ENCODE measurements at regions of chr17 and their contacts with region 1.

Region 1: DNA sequence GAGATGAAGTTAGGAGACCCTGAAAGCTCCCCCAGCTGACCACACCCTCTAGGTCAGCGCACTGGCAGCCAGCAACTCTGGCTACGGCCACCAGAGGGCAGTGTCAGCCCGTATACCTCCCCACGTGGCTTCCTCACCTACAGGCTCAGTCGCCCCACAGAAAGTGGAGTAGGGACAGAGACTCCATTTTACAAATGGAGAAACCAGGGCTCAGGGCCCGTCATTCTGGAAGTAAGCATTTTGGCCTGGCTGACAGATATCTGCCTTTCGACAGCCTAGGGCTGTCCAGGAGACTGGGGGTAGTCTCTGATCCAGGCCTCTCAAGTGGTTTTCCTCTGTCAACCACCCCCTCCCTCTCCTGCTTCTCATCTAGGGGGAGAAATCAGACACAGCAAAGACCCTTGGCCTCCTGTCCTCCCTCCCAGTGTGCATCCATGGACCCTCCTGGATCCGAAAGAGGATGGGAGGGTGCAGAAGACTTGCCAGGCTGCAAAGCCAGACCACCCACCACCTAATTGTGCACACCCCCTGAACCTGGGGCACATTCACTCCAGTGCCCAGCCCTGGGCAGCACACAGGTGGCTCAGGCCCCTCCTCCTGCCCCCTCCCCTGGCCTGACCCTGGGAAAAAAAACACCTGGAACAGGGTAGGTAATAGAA is 3.8 kb upstream of the HAP1 start:
- DNase-seq: peak; percentile 88
- ATAC-seq: peak; percentile 87

Region 2: GRCh38 chr17:41801374-41802271 is 63.4 kb after region 1 on chr17:
- intact Hi-C with region 1: loop called (anchors 2 kb)
- DNase-seq: peak; percentile 90
- ATAC-seq: peak; percentile 88

Region 3: DNA sequence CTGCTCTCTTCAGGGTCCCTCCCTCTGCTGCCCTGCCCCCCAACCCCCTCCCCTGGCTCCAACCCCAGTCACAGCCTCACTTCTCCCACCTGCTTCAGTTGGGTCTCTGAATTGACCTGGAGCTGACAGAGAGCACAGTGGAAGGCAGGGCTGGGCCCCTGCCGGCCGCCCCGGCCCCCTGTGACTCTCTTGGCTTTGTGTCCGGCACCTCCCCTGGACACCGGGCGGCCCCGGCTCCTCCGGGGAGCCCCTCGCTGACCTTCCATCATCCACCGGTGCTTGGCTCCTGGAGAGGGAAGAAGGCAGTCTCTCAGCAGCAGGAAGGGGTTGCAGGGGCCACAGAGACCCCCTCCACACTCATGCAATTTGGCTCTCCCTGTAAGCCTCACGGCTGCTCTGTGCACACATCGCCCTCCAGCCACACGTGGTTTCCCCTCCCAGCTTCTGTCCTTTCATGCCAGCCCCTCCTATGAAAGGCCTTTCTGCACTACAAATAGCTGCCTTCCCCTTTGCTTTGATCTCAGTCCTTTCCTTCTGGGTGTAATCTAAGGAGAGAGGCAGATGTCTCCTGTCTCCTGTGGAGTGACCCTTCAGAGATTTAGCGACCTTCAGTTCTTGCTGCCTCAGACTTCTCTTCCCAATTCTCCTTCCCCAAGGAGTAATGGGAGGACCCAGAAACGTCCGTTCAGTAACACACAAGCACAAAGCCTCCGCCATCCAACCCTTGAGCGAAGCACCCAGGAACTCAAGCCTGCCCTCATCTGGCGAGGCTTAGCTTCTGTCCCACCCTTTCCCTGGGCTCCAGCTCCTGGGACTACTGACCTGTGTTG is 290.0 kb after region 1 on chr17:
- intact Hi-C with region 1: no loop called
- DNase-seq: no peak
- ATAC-seq: no peak